ENCODE measurements at regions of chr2 and their contacts with region 1.

Region 1: GRCh38 chr2:127415593-127416505 is 2.4 kb upstream of the PROC start:
- DNase-seq: peak; percentile 80 to 94 (median 82)
- H3K4me3 ChIP-seq: peak overlapping the region; percentile 55 to 88
- H3K4me3 Mint-ChIP-seq: peak overlapping the region; percentile 84 to 93 (median 86)
- H3K27ac ChIP-seq: peak overlapping the region; percentile 45
- H3K27ac Mint-ChIP-seq: peak overlapping the region; percentile 73 to 92 (median 79)
- H3K4me1 ChIP-seq: peaks cover 26% of the 10 kb centered on the region
- H3K4me1 Mint-ChIP-seq: peaks cover 14 to 37% (median 25%) of the 10 kb centered on the region in 4 donors
- H3K27me3 ChIP-seq: no peaks in the 10 kb centered on the region
- H3K27me3 Mint-ChIP-seq: peaks cover 1 to 4% of the 10 kb centered on the region in 2 donors

Region 2: DNA sequence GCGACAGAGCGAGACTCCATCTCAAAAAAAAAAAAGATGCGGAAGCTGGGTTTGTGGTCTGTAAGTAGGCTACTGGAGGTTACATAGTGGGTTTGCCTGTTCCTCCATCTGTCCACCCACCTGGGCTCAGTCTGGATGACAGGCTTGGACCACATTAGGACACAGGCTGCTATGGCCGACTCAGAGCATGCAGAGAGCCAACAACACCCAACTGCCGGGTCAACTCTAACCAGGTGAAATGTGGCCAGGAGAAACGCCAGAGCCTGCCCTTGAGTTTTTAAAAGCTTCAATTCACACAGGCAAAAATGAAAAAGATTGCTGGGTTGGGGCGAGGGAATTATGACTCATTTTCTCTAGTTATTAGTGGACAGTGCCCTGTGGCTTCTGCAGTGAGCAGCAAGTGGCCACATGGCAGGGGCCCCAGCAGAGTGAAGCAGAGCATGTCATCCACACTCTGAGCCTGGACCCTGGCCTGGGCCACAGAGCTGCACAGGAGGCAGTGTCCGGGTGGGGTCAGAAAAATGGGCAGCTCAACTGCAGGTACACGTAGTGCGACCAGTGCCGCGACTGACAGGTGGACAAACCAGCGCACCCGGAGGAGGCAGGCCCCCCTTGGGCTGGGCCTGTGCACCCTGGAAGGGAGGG is 376.3 kb before region 1 on chr2:
- CTCF ChIA-PET with region 1: no interaction called
- POLR2A ChIA-PET with region 1: no interaction called
- intact Hi-C with region 1: no loop called
- DNase-seq: no peak
- H3K4me3 ChIP-seq: no peak overlapping the region
- H3K4me3 Mint-ChIP-seq: no peak overlapping the region
- H3K27ac ChIP-seq: no peak overlapping the region
- H3K27ac Mint-ChIP-seq: peak overlapping the region in 3 of 7 donors; percentile 14 to 68 (median 65)
- H3K4me1 ChIP-seq: no peaks in the 10 kb centered on the region
- H3K4me1 Mint-ChIP-seq: peaks cover 0 to 5% (median 0%) of the 10 kb centered on the region in 4 donors
- H3K27me3 ChIP-seq: no peaks in the 10 kb centered on the region
- H3K27me3 Mint-ChIP-seq: no peaks in the 10 kb centered on the region

Region 3: DNA sequence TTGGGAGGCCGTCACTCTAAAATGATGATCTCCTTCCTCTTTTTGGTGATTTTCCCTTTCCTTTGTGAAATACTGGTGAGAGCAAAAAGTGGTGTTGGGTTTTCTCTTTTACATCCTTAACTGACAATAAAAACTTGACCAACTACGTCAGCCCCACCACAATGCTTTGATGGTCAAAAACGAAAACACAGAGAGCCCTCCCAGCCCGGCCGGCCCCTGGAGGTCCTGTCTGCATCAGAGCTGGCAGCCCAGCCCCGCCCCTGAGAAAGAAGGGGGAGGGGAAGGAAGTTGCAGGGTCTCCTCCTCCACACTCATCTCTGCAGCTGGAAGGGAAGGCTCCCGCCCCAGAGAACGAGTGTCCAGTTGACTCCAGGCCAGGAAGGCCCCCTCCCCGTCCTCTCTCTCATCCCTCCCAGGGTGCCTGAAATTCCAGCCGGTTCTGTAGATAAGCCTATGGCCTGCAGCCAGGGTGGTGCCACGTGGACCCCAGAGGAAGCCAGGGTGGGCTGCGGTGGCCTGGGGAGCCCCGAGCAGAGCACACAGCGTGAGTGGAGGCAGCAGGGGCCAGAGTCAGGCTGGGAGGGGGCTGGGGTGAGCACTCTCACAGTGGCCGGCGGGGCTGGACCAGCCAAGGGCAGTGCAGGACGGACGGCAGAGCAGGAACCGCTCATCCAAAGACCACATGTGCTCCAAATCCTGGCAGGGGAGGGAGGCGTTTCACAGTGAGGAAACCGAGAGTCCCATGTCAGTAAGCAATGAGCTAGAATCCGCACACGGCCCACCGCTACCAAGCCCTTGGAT is 328.7 kb before region 1 on chr2:
- CTCF ChIA-PET with region 1: no interaction called
- POLR2A ChIA-PET with region 1: no interaction called
- intact Hi-C with region 1: loop called (anchors 10 kb)
- DNase-seq: no peak
- H3K4me3 ChIP-seq: no peak overlapping the region
- H3K4me3 Mint-ChIP-seq: no peak overlapping the region
- H3K27ac ChIP-seq: no peak overlapping the region
- H3K27ac Mint-ChIP-seq: peak overlapping the region in 4 of 7 donors; percentile 15 to 66 (median 59)
- H3K4me1 ChIP-seq: peaks cover 38% of the 10 kb centered on the region
- H3K4me1 Mint-ChIP-seq: peaks cover 13 to 43% (median 28%) of the 10 kb centered on the region in 4 donors
- H3K27me3 ChIP-seq: no peaks in the 10 kb centered on the region
- H3K27me3 Mint-ChIP-seq: peaks cover 0 to 2% of the 10 kb centered on the region in 2 donors

Region 4: GRCh38 chr2:127197475-127198385 is 218.1 kb before region 1 on chr2:
- CTCF ChIA-PET with region 1: interaction called, 3 read pairs
- POLR2A ChIA-PET with region 1: no interaction called
- intact Hi-C with region 1: loop called (anchors 5 kb)
- DNase-seq: peak in 4 of 5 donors; percentile 24 to 41 (median 34)
- H3K4me3 ChIP-seq: no peak overlapping the region
- H3K4me3 Mint-ChIP-seq: peak overlapping the region; percentile 80 to 94 (median 88)
- H3K27ac ChIP-seq: no peak overlapping the region
- H3K27ac Mint-ChIP-seq: peak overlapping the region in 3 of 7 donors; percentile 8 to 67 (median 48)
- H3K4me1 ChIP-seq: no peaks in the 10 kb centered on the region
- H3K4me1 Mint-ChIP-seq: peaks cover 0 to 7% (median 5%) of the 10 kb centered on the region in 4 donors
- H3K27me3 ChIP-seq: no peaks in the 10 kb centered on the region
- H3K27me3 Mint-ChIP-seq: no peaks in the 10 kb centered on the region

Region 5: GRCh38 chr2:127348426-127349000 is 67.3 kb before region 1 on chr2:
- CTCF ChIA-PET with region 1: interaction called, 14 read pairs
- POLR2A ChIA-PET with region 1: no interaction called
- intact Hi-C with region 1: no loop called
- DNase-seq: no peak
- H3K4me3 ChIP-seq: no peak overlapping the region
- H3K4me3 Mint-ChIP-seq: peak overlapping the region in 1 of 8 donors; percentile 6
- H3K27ac ChIP-seq: no peak overlapping the region
- H3K27ac Mint-ChIP-seq: peak overlapping the region in 4 of 7 donors; percentile 0 to 58 (median 12)
- H3K4me1 ChIP-seq: peaks cover 38% of the 10 kb centered on the region
- H3K4me1 Mint-ChIP-seq: peaks cover 41 to 81% (median 60%) of the 10 kb centered on the region in 4 donors
- H3K27me3 ChIP-seq: no peaks in the 10 kb centered on the region
- H3K27me3 Mint-ChIP-seq: no peaks in the 10 kb centered on the region

Region 6: DNA sequence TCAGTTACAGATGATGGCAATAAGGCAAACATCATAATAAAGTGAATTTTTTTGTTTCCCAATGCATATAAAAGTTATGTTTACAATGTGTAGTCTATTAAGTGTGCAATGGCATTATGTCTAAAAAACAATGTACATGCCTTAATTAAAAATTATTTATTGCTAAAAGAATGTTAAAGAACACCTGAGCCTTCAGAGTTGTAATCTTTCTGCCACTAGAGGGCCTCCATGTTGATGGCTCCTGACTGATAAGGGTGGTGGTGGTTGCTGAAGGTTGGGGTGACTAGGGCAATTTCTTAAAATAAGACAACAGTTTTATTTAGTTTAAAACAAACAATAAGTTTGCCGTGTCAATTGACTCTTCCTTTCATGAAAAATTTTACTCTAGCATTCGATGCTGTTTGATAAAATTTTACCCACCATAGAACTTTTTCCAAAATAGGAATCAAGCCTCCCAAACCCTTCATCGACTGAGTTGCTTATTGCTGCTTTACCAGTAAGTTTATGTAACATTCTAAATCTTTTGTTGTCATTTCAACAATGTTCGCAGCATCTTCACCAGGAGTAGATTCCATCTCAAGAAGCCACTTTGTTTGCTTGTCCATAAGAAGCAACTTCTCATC is 60.4 kb before region 1 on chr2:
- CTCF ChIA-PET with region 1: interaction called, 14 read pairs
- POLR2A ChIA-PET with region 1: no interaction called
- intact Hi-C with region 1: loop called (anchors 1 kb)
- DNase-seq: peak; percentile 43 to 63 (median 48)
- H3K4me3 ChIP-seq: no peak overlapping the region
- H3K4me3 Mint-ChIP-seq: no peak overlapping the region
- H3K27ac ChIP-seq: no peak overlapping the region
- H3K27ac Mint-ChIP-seq: peak overlapping the region in 1 of 7 donors; percentile 73
- H3K4me1 ChIP-seq: peaks cover 16% of the 10 kb centered on the region
- H3K4me1 Mint-ChIP-seq: peaks cover 39 to 78% (median 59%) of the 10 kb centered on the region in 4 donors
- H3K27me3 ChIP-seq: no peaks in the 10 kb centered on the region
- H3K27me3 Mint-ChIP-seq: no peaks in the 10 kb centered on the region

Region 7: GRCh38 chr2:127695491-127696472 is 279.9 kb after region 1 on chr2:
- CTCF ChIA-PET with region 1: no interaction called
- POLR2A ChIA-PET with region 1: no interaction called
- intact Hi-C with region 1: no loop called
- DNase-seq: peak in 4 of 5 donors; percentile 42 to 52 (median 46)
- H3K4me3 ChIP-seq: no peak overlapping the region
- H3K4me3 Mint-ChIP-seq: no peak overlapping the region
- H3K27ac ChIP-seq: no peak overlapping the region
- H3K27ac Mint-ChIP-seq: no peak overlapping the region
- H3K4me1 ChIP-seq: peaks cover 7% of the 10 kb centered on the region
- H3K4me1 Mint-ChIP-seq: peaks cover 2 to 13% (median 6%) of the 10 kb centered on the region in 4 donors
- H3K27me3 ChIP-seq: no peaks in the 10 kb centered on the region
- H3K27me3 Mint-ChIP-seq: no peaks in the 10 kb centered on the region